Naive thymus-derived CD4-positive, alpha-beta T cell (primary cell): ENCODE measurements at regions of chr11 and their contacts with region 1.

Region 1: DNA sequence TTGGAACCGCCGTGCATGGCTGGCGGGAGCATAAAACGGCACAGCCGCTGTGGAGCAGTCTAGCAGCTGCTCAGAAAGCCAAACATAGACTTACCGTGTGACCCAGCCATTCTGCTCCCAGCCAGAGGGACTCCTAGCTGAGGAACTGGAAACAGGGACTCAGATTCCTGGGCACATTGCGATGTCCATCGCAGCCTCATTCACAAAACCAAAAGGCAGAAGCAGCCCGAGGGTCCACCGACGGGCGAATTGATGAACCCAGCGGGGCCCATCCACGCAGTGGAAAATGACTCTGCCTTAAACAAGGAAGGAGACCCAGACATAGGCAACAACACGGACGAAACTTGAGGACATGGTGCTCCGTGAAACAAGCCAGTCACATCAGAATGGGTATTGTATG is 5.7 kb upstream of the MUC5B start:
- DNase-seq: no peak
- ATAC-seq: no peak
- H3K4me3 ChIP-seq: no peak overlapping the region
- H3K4me3 Mint-ChIP-seq: no peak overlapping the region
- H3K27ac ChIP-seq: no peak overlapping the region
- H3K27ac Mint-ChIP-seq: no peak overlapping the region
- H3K4me1 ChIP-seq: no peaks in the 10 kb centered on the region
- H3K4me1 Mint-ChIP-seq: no peaks in the 10 kb centered on the region
- H3K27me3 ChIP-seq: no peaks in the 10 kb centered on the region
- H3K27me3 Mint-ChIP-seq: peaks cover 3 to 24% (median 21%) of the 10 kb centered on the region in 5 donors

Region 2: GRCh38 chr11:952406-953385 is 264.5 kb before region 1 on chr11:
- CTCF ChIA-PET with region 1: no interaction called
- POLR2A ChIA-PET with region 1: no interaction called
- intact Hi-C with region 1: no loop called
- DNase-seq: no peak
- ATAC-seq: no peak
- H3K4me3 ChIP-seq: no peak overlapping the region
- H3K4me3 Mint-ChIP-seq: no peak overlapping the region
- H3K27ac ChIP-seq: no peak overlapping the region
- H3K27ac Mint-ChIP-seq: peak overlapping the region in 7 of 9 donors; percentile 2 to 72 (median 47)
- H3K4me1 ChIP-seq: peaks cover 0 to 5% of the 10 kb centered on the region in 2 donors
- H3K4me1 Mint-ChIP-seq: peaks cover 4 to 49% (median 42%) of the 10 kb centered on the region in 7 donors
- H3K27me3 ChIP-seq: no peaks in the 10 kb centered on the region
- H3K27me3 Mint-ChIP-seq: no peaks in the 10 kb centered on the region

Region 3: DNA sequence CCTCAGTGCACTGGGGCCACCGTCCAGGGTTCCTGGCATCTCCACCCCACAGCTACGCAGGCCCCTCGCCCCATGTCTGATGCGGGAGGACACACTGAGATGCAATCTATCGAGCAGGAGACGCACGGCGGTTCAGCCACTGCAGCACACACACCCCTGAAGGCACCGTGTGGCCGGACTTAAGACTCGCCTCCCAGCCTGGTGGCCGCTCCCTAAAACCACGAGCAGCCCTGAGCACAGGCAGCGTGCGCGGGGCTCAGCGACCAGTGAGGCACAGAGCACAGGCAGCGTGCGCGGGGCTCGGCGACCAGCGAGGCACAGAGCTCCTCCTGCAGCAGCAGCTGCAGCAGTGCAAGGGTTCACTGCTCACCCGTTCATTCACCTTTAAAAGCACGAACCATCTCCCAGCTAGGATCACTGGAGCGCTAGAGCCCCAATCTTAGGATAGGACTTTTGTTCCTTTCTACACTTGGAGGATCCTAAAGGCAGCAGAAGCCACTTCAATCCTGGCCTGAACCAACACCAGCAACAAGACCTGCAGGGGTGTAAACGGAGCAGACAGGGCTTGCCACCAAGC is 60.9 kb after region 1 on chr11:
- CTCF ChIA-PET with region 1: no interaction called
- POLR2A ChIA-PET with region 1: no interaction called
- intact Hi-C with region 1: loop called in 1 of 2 experiments (anchors 2 kb)
- DNase-seq: no peak
- ATAC-seq: no peak
- H3K4me3 ChIP-seq: no peak overlapping the region
- H3K4me3 Mint-ChIP-seq: no peak overlapping the region
- H3K27ac ChIP-seq: no peak overlapping the region
- H3K27ac Mint-ChIP-seq: peak overlapping the region in 1 of 9 donors; percentile 17
- H3K4me1 ChIP-seq: no peaks in the 10 kb centered on the region
- H3K4me1 Mint-ChIP-seq: peaks cover 0 to 2% (median 0%) of the 10 kb centered on the region in 7 donors
- H3K27me3 ChIP-seq: no peaks in the 10 kb centered on the region
- H3K27me3 Mint-ChIP-seq: no peaks in the 10 kb centered on the region